RWPE1 (cell line): ENCODE measurements at regions of chr5 and their contacts with region 1.

Region 1: DNA sequence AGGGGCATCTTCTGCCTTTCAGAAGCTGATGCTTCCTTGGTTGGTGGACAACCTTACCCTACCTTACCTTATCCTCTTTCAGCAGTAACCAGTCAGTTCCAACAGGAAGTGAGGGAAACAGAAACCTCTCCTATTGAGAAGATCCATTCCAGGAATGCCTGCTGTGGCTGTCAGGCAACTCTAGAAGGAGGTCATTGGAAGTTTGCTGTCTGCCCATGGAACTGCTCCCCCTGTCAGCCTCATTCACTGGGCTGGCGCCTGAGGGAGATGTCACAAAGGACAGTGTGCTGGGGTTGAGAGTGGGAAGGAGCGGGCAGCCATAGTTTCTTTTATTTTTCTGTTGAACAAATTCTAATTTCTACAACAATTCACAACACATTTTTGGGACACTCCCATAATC is 54.7 kb downstream of the IRX1 start:
- DNase-seq: no peak
- H3K27ac ChIP-seq: no peak overlapping the region
- CTCF ChIP-seq: no peak

Region 2: GRCh38 chr5:3382782-3383181 is 267.5 kb before region 1 on chr5:
- CTCF ChIA-PET with region 1: interaction called, 11 read pairs
- POLR2A ChIA-PET with region 1: no interaction called
- DNase-seq: no peak
- H3K27ac ChIP-seq: no peak overlapping the region
- CTCF ChIP-seq: no peak

Region 3: GRCh38 chr5:3639175-3639574 is 11.1 kb before region 1 on chr5:
- CTCF ChIA-PET with region 1: no interaction called
- POLR2A ChIA-PET with region 1: no interaction called
- DNase-seq: no peak
- H3K27ac ChIP-seq: no peak overlapping the region
- CTCF ChIP-seq: no peak

Region 4: GRCh38 chr5:3913279-3913678 is 263.0 kb after region 1 on chr5:
- CTCF ChIA-PET with region 1: no interaction called
- POLR2A ChIA-PET with region 1: no interaction called
- DNase-seq: no peak
- H3K27ac ChIP-seq: no peak overlapping the region
- CTCF ChIP-seq: no peak